Gastrocnemius medialis (tissue), 4 donors: ENCODE measurements at regions of chr6 and their contacts with region 1.

Region 1: DNA sequence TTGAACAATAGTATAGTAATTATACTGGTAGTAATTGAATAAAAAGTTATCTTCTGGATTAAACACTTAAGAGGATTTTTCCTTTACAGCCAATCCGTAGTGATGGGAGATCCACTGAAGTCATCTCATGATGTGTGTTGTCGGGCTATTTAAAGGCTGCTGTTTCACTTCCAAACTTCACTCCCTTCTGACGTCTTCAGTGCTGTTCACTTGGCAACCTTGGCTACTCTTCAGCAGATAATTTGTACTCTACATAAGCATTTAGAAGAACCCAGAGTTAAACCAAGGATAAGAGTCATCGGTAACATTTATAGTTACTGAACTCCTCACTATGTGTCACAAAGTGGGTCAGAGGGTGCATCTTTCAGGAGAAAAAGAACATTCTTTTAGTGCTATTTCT is 179.1 kb upstream of the EYA4 start:
- DNase-seq: peak; percentile 46 to 51
- ATAC-seq: peak; percentile 97 to 99
- H3K4me3 ChIP-seq: peak overlapping the region in 2 of 4 donors; percentile 21 to 30
- H3K27ac ChIP-seq: peak overlapping the region; percentile 59 to 79 (median 74)
- H3K4me1 ChIP-seq: peaks cover 14 to 17% of the 10 kb centered on the region in 2 donors
- H3K27me3 ChIP-seq: no peaks in the 10 kb centered on the region
- CTCF ChIP-seq: no peak
- POLR2A ChIP-seq: peak in 1 of 2 donors; percentile 33

Region 2: GRCh38 chr6:133083248-133083967 is 21.3 kb after region 1 on chr6:
- in situ Hi-C with region 1: no loop called
- intact Hi-C with region 1: loop called (anchors 2 kb)
- DNase-seq: peak; percentile 39 to 55
- ATAC-seq: peak; percentile 97 to 98
- H3K4me3 ChIP-seq: no peak overlapping the region
- H3K27ac ChIP-seq: peak overlapping the region; percentile 62 to 85 (median 76)
- H3K4me1 ChIP-seq: peaks cover 17 to 18% of the 10 kb centered on the region in 2 donors
- H3K27me3 ChIP-seq: no peaks in the 10 kb centered on the region
- CTCF ChIP-seq: no peak
- POLR2A ChIP-seq: no peak

Region 3: GRCh38 chr6:133130863-133131262 is 68.8 kb after region 1 on chr6:
- in situ Hi-C with region 1: no loop called
- intact Hi-C with region 1: loop called (anchors 5 kb)
- DNase-seq: peak; percentile 91
- ATAC-seq: peak; percentile 84 to 91
- H3K4me3 ChIP-seq: no peak overlapping the region
- H3K27ac ChIP-seq: peak overlapping the region; percentile 73 to 85 (median 80)
- H3K4me1 ChIP-seq: peaks cover 32 to 38% of the 10 kb centered on the region in 2 donors
- H3K27me3 ChIP-seq: no peaks in the 10 kb centered on the region
- CTCF ChIP-seq: peak in 2 of 5 experiments; percentile 24 to 26
- POLR2A ChIP-seq: no peak

Region 4: GRCh38 chr6:133286765-133287164 is 224.7 kb after region 1 on chr6:
- in situ Hi-C with region 1: no loop called
- intact Hi-C with region 1: no loop called
- DNase-seq: no peak
- ATAC-seq: peak in 1 of 2 donors; percentile 57
- H3K4me3 ChIP-seq: no peak overlapping the region
- H3K27ac ChIP-seq: peak overlapping the region in 2 of 4 donors; percentile 29 to 67
- H3K4me1 ChIP-seq: peaks cover 45 to 62% of the 10 kb centered on the region in 2 donors
- H3K27me3 ChIP-seq: no peaks in the 10 kb centered on the region
- CTCF ChIP-seq: peak in 3 of 5 experiments; percentile 26 to 40 (median 37)
- POLR2A ChIP-seq: no peak

Region 5: DNA sequence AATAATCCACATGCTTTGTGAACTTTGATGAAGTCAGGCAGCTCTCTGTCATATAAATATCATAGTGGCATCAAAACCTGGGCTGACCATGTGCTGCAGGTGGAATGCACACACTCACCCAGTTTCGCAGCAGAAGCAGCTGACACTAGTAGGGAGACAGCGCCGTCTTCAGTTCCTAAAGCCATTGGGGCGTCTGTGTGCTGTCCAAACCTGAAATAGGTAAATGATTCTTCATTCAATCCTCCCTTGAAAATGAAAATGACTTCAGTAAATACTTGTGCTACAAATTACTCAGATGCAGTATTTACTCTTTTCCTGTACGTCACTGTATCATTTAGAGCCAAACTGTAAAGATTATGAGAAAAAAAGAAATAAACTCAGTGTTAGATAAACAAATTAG is 306.6 kb after region 1 on chr6:
- in situ Hi-C with region 1: no loop called
- intact Hi-C with region 1: loop called (anchors 10 kb)
- DNase-seq: peak; percentile 76 to 85
- ATAC-seq: peak; percentile 92 to 97
- H3K4me3 ChIP-seq: no peak overlapping the region
- H3K27ac ChIP-seq: peak overlapping the region; percentile 68 to 80 (median 74)
- H3K4me1 ChIP-seq: peaks cover 51 to 81% of the 10 kb centered on the region in 2 donors
- H3K27me3 ChIP-seq: no peaks in the 10 kb centered on the region
- CTCF ChIP-seq: peak; percentile 36 to 73 (median 55)
- POLR2A ChIP-seq: no peak